ENCODE measurements at regions of chr13 and their contacts with region 1.

Region 1: GRCh38 chr13:29923554-29924481 is 73.4 kb upstream of the UBL3 start:
- DNase-seq: peak; percentile 99
- ATAC-seq: peak; percentile 83
- H3K4me3 ChIP-seq: no peak overlapping the region
- H3K27ac ChIP-seq: peak overlapping the region; percentile 77
- H3K4me1 ChIP-seq: peaks cover 27% of the 10 kb centered on the region
- H3K27me3 ChIP-seq: no peaks in the 10 kb centered on the region
- CTCF ChIP-seq: peak; percentile 80
- POLR2A ChIP-seq: no peak
- RAD21 ChIP-seq: peak; percentile 70

Region 2: GRCh38 chr13:29182216-29182615 is 741.6 kb before region 1 on chr13:
- CTCF ChIA-PET with region 1: no interaction called
- POLR2A ChIA-PET with region 1: no interaction called
- dilution Hi-C with region 1: no loop called
- in situ Hi-C with region 1: no loop called
- intact Hi-C with region 1: no loop called
- DNase-seq: no peak
- ATAC-seq: no peak
- H3K4me3 ChIP-seq: no peak overlapping the region
- H3K27ac ChIP-seq: no peak overlapping the region
- H3K4me1 ChIP-seq: no peaks in the 10 kb centered on the region
- H3K27me3 ChIP-seq: no peaks in the 10 kb centered on the region
- CTCF ChIP-seq: no peak
- POLR2A ChIP-seq: no peak
- RAD21 ChIP-seq: no peak

Region 3: GRCh38 chr13:29771247-29771646 is 152.6 kb before region 1 on chr13:
- CTCF ChIA-PET with region 1: interaction called, 5 read pairs
- POLR2A ChIA-PET with region 1: no interaction called
- dilution Hi-C with region 1: no loop called
- in situ Hi-C with region 1: no loop called
- intact Hi-C with region 1: loop called (anchors 1 kb)
- DNase-seq: peak; percentile 49
- ATAC-seq: no peak; the same call in 1 of the 2 replicates
- H3K4me3 ChIP-seq: no peak overlapping the region
- H3K27ac ChIP-seq: no peak overlapping the region
- H3K4me1 ChIP-seq: 0 out of 2 replicates have a peak, but pooled peaks cover 2% of the 10 kb centered on the region
- H3K27me3 ChIP-seq: no peaks in the 10 kb centered on the region
- CTCF ChIP-seq: peak; percentile 59
- POLR2A ChIP-seq: no peak
- RAD21 ChIP-seq: peak; percentile 64

Region 4: DNA sequence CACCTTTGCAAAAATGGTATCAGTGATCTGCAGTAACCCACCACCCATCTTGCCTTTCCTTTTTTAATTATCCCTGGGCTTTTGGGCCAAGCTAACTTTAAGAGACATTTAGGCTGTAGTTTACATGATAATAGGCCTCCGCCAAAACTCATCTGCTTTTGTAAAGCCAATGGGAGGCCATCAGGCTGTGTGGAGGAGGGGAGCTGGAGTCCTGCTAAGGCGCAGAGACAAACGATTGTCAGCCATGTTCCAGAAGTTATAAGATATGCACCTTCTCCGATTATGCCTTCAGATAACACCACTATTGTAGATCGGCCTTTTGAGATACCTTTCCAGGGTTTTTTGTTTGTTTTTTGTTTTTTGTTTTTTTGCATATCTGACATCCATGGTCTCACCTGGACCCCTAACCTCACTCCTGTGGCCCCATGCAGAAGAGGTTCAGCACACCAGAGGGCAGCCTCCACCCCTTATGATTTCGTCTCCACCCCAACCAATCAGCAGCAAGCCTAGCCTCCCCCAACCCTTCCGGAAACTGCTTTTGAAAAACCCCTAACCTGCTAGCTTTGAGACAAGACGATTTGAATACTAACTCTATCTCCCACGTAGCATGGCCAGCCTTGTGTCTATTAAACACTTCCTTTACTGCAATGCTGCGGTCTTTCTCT is 40.5 kb after region 1 on chr13:
- CTCF ChIA-PET with region 1: no interaction called
- POLR2A ChIA-PET with region 1: no interaction called
- dilution Hi-C with region 1: no loop called
- in situ Hi-C with region 1: no loop called
- intact Hi-C with region 1: no loop called
- DNase-seq: no peak
- ATAC-seq: no peak
- H3K4me3 ChIP-seq: no peak overlapping the region
- H3K27ac ChIP-seq: no peak overlapping the region
- H3K4me1 ChIP-seq: no peaks in the 10 kb centered on the region
- H3K27me3 ChIP-seq: peaks cover 12% of the 10 kb centered on the region
- CTCF ChIP-seq: no peak
- POLR2A ChIP-seq: no peak
- RAD21 ChIP-seq: no peak

Region 5: DNA sequence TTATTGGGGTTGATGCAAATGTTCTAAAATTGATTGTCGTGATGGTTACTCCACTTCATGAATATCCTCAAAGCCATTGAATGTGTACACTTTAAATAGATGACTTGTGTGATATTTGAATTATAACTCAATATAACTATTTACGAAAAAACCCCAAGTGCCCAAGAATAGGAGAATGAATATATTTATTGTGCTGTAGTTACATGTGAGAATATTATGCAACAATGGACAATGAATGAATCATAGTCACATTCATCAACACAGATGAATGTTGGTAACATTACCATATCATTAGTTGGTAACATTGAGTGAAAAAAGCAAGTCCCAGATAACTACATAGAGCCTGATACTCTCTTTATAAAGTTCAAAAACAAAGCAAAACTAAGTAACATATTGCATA is 54.4 kb after region 1 on chr13:
- CTCF ChIA-PET with region 1: no interaction called
- POLR2A ChIA-PET with region 1: no interaction called
- dilution Hi-C with region 1: no loop called
- in situ Hi-C with region 1: loop called (anchors 10 kb)
- intact Hi-C with region 1: no loop called
- DNase-seq: peak; percentile 18
- ATAC-seq: no peak
- H3K4me3 ChIP-seq: no peak overlapping the region
- H3K27ac ChIP-seq: no peak overlapping the region
- H3K4me1 ChIP-seq: peaks cover 3% of the 10 kb centered on the region; the same call in 1 of the 2 replicates
- H3K27me3 ChIP-seq: no peaks in the 10 kb centered on the region
- CTCF ChIP-seq: no peak
- POLR2A ChIP-seq: no peak
- RAD21 ChIP-seq: no peak

Measured in IMR-90 (cell line).